Mammary epithelial cell (primary cell): ENCODE measurements at regions of chr17 and their contacts with region 1.

Region 1: DNA sequence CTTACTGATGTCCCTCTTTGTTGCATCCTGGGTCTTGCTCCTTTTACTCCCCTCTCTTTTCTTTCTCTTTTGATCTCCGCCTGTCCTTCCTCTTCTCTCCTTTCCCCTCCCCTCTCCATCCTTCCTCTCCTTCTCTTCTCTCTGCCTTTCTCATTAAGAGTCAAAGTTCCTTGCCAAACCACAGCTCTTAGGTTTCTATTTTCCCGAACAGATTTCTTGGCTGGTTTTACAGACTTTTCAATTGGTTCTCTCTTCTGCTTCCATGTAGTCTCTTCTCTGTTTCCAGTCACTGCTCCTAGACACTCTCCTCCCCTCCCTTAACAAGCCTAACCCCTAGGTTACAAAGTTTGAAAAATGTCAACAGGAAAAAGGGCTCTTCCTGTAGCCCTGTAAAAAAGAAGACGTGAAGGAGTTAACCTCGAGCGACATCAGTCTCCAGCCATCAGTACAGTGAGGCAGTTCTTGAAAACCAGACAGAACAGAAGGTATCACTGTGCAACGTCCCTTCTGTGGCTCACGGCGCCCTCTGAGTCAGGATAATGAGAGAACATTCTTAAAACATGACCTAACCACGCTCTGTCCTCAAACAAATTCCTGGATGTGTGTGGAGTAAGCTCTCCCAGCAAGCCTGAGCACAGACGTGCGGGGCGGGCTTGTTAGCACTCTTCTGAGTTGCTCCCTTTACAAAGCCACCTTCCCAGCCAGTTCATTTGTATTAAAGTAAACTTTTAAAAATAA is 11.5 kb upstream of the MARCHF10 start:
- DNase-seq: peak; percentile 98
- H3K4me3 ChIP-seq: peak overlapping the region in 2 of 3 experiments; percentile 5 to 20
- H3K27ac ChIP-seq: peak overlapping the region; percentile 97
- H3K4me1 ChIP-seq: peaks cover 59% of the 10 kb centered on the region
- H3K27me3 ChIP-seq: no peaks in the 10 kb centered on the region
- CTCF ChIP-seq: no peak

Region 2: GRCh38 chr17:62724398-62725146 is 95.1 kb before region 1 on chr17:
- CTCF ChIA-PET with region 1: no interaction called
- dilution Hi-C with region 1: no loop called
- in situ Hi-C with region 1: no loop called
- intact Hi-C with region 1: loop called (anchors 5 kb)
- DNase-seq: peak; percentile 90
- H3K4me3 ChIP-seq: peak overlapping the region in 1 of 3 experiments; percentile 31
- H3K27ac ChIP-seq: peak overlapping the region; percentile 70
- H3K4me1 ChIP-seq: peaks cover 29% of the 10 kb centered on the region
- H3K27me3 ChIP-seq: no peaks in the 10 kb centered on the region
- CTCF ChIP-seq: no peak

Region 3: GRCh38 chr17:62892870-62893338 is 73.3 kb after region 1 on chr17:
- CTCF ChIA-PET with region 1: no interaction called
- dilution Hi-C with region 1: no loop called
- in situ Hi-C with region 1: no loop called
- intact Hi-C with region 1: loop called (anchors 5 kb)
- DNase-seq: peak; percentile 98
- H3K4me3 ChIP-seq: no peak overlapping the region
- H3K27ac ChIP-seq: peak overlapping the region; percentile 82
- H3K4me1 ChIP-seq: peaks cover 40% of the 10 kb centered on the region
- H3K27me3 ChIP-seq: no peaks in the 10 kb centered on the region
- CTCF ChIP-seq: no peak

Region 4: GRCh38 chr17:63434876-63435684 is 615.4 kb after region 1 on chr17:
- CTCF ChIA-PET with region 1: interaction called, 22 read pairs
- dilution Hi-C with region 1: no loop called
- in situ Hi-C with region 1: no loop called
- intact Hi-C with region 1: no loop called
- DNase-seq: peak; percentile 76
- H3K4me3 ChIP-seq: no peak overlapping the region
- H3K27ac ChIP-seq: no peak overlapping the region
- H3K4me1 ChIP-seq: peaks cover 29% of the 10 kb centered on the region
- H3K27me3 ChIP-seq: no peaks in the 10 kb centered on the region
- CTCF ChIP-seq: peak; percentile 31 to 36